Left ventricle myocardium superior (tissue), 1 donor: ENCODE measurements at regions of chr19 and their contacts with region 1.

Region 1: GRCh38 chr19:44954824-44955586 is at the start of gene CLPTM1:
- DNase-seq: peak; percentile 98
- ATAC-seq: peak; percentile 96
- total RNA-seq, gene CLPTM1: 97.6 TPM

Region 2: DNA sequence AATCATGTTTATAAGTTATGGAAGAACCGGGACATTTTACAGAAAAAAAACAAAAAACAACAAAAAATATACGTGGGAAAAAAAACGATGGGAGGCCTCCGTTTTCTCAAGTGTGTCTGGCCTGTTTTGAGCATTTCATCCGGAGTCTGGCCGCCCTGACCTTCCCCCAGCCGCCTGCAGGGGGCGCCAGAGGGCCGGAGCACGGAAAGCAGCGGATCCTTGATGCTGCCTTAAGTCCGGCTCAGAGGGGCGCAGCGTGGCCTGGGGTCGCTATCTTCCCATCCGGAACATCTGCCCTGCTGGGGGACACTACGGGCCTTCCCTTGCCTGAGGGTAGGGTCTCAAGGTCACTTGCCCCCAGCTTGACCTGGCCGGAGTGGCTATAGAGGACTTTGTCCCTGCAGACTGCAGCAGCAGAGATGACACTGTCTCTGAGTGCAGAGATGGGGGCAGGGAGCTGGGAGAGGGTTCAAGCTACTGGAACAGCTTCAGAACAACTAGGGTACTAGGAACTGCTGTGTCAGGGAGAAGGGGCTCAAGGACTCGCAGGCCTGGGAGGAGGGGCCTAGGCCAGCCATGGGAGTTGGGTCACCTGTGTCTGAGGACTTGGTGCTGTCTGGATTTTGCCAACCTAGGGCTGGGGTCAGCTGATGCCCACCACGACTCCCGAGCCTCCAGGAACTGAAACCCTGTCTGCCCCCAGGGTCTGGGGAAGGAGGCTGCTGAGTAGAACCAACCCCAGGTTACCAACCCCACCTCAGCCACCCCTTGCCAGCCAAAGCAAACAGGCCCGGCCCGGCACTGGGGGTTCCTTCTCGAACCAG is 51.2 kb before region 1 on chr19:
- intact Hi-C with region 1: loop called (anchors 5 kb)
- DNase-seq: peak; percentile 84
- ATAC-seq: peak; percentile 77